Posterior cingulate gyrus (tissue), 11 donors: ENCODE measurements at regions of chr6 and their contacts with region 1.

Region 1: DNA sequence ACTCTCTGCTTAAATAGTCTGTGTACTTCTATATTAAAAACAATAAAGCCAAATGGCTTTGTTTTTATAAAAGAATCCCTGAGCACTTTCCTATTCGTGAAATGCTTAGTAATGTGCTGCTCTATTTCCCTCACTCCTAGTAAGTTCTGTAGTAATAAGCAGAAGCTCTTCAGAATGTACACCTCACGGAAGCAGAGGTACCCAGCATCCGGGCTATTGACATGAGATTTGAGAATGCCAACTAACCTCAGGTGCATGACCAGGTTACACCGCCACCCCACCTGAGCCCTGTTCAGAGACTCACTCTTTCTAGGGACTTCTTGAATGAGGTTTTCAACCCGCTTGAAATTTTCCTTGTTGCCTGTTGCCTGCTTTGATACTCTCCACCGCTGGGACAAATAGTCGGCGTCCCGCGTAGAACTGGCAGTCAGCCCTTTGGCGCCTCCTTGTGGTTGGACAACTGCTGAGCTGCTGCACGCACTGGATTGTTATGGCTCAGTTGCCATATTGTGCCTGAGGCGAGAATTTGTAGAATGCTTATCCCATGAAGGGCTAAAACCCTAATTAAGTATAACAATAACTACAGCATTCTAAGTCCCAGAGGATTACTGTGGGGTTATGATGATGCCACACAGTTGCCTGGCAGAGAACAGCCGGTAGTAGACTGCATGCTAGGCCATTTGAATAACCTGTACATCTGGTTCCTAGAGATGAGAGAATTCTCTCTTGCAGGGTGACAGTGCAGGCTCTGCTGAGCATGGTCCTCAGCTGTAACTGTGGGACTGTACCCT is 95.4 kb downstream of the KHDC1L start:
- DNase-seq: peak; percentile 48 to 96 (median 86)

Region 2: DNA sequence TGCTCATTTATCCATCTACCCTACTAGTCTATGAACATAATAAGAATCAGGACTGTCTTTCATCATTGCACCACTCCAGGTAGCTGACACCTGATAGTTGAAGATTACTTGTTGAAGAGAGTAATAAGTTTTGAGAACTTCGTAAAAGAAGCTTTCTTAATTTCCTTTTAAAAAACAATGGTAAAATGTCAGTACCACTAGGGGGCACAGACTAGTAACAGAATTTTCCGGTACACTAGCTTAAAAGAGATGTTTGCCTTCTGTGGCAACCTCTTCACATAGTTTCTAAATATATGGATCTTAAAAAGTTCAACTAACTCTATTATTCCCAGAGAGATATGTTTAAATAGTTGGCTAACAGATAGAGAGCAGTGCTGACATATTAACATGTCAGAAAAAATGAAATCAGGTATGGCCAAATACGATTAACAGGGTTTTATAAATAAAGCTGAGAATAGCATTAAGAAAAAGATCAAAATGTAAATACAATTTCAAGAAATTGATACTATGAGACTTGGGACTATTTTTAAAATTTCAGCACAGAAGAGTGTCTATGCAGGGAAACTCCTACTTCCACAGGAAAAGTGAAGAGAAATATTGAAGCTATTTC is 513.3 kb before region 1 on chr6:
- intact Hi-C with region 1: loop called (anchors 2 kb)
- DNase-seq: no peak